ENCODE measurements at regions of chr14 and their contacts with region 1.

Region 1: GRCh38 chr14:80996049-80996901 is 40.9 kb downstream of the TSHR start:
- H3K4me3 Mint-ChIP-seq: no peak overlapping the region
- H3K27ac Mint-ChIP-seq: no peak overlapping the region
- H3K4me1 Mint-ChIP-seq: peaks cover 12% of the 10 kb centered on the region
- H3K27me3 Mint-ChIP-seq: no peaks in the 10 kb centered on the region

Region 2: GRCh38 chr14:80941241-80942182 is 54.8 kb before region 1 on chr14 and contains the start of gene CEP128:
- intact Hi-C with region 1: no loop called
- H3K4me3 Mint-ChIP-seq: peak within 1 kb of the TSS; percentile 86
- H3K27ac Mint-ChIP-seq: peak within 1 kb of the TSS; percentile 82
- H3K4me1 Mint-ChIP-seq: peaks cover 21% of the 10 kb centered on the region
- H3K27me3 Mint-ChIP-seq: no peaks in the 10 kb centered on the region

Region 3: GRCh38 chr14:81170104-81170828 is 174.0 kb after region 1 on chr14:
- intact Hi-C with region 1: loop called (anchors 1 kb)
- H3K4me3 Mint-ChIP-seq: peak overlapping the region; percentile 83
- H3K27ac Mint-ChIP-seq: peak overlapping the region; percentile 99
- H3K4me1 Mint-ChIP-seq: peaks cover 61% of the 10 kb centered on the region
- H3K27me3 Mint-ChIP-seq: no peaks in the 10 kb centered on the region

Region 4: GRCh38 chr14:81211844-81212243 is 215.6 kb after region 1 on chr14:
- intact Hi-C with region 1: loop called (anchors 1 kb)
- H3K4me3 Mint-ChIP-seq: no peak overlapping the region
- H3K27ac Mint-ChIP-seq: no peak overlapping the region
- H3K4me1 Mint-ChIP-seq: peaks cover 47% of the 10 kb centered on the region
- H3K27me3 Mint-ChIP-seq: no peaks in the 10 kb centered on the region